MCF 10A (cell line): ENCODE measurements at regions of chr3 and their contacts with region 1.

Region 1: DNA sequence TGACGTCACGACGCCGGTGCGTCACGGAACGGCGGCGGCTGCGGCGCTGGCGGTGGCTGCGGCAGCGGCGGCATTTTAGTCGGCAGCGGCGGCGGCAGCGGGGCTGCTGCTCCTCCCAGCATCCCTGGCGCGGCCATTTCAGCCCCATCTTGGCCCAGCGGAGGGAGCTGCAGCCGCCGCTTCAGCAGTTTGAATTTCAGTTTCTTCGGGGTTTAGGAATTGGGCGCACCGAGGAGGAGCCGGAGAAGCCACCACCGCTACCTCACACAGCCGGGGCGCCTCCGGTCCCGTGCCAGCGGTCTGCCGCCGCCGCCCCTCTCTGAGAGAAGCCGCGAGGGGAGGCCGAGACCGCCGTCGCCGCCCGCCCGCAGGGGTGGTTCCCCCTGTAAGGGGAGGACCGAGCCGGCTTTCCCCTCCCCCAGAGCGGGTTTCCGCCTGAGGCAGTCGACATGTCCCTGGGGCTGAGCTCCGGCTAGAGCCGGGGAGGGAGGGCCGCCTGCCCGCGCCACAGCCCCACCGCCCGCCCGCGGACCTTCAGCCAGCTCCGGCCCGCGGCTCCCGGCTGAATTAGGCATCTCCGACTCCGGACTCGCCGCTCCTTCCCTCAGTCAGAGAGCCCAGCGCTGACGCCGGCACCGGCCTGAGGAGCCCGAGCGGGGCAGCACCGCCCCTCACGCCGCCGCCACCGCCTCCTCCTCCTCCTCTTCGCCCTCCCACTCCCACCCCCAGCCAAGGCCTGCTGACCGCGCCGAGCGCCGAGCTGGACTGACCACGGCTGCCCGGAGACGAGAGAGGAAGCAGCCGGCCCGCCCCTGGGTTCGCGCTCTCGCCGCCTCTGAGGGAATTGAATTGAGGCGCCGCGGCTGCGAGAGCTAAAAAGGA is at the start of gene TSC22D2:
- DNase-seq: peak; percentile 76
- H3K4me3 Mint-ChIP-seq: peak within 1 kb of the TSS; percentile 74
- H3K27ac Mint-ChIP-seq: peak within 1 kb of the TSS; percentile 99
- H3K4me1 Mint-ChIP-seq: peaks cover 17% of the 10 kb centered on the region
- H3K27me3 Mint-ChIP-seq: no peaks in the 10 kb centered on the region
- CTCF ChIP-seq: peak; percentile 10
- total RNA-seq, gene TSC22D2: 31.2 and 36.2 TPM in 2 replicates

Region 2: DNA sequence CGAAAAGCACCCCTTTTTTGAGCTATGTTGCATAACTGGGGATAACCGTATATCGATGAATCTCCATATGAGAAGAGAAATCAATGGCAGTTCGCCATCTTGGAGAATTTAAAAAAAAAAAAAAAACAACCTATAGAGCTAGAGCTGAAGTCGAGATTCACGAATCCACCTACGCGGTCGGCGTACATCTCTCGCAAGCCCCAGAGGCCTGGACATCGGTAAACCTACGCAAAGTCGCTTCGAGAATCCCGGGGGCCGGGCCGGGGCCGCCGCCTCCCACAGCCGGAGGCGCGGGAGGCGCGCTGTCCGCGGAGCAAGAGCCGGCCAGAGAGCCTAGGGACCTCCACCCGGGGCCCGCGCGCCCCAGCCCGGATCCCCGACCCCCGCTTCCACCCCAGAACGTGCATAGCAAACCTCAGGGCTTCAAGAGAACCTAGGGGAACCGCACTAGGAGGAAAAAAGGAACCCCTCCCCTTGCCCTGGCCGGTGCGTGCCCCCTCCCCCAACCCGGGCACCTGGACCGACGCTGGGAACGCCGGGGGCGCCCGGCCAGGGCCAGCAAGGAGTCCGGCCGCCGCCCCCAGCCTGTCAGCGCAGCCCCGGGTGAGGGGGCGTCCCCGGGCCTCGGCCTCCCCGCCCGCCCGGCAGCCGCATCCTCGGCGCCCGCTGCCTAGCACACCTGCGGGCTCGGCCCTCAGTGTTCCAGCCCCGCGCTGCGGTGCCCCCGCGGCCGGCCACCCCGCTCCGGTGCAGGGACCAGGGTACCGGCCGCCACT is 438.3 kb before region 1 on chr3:
- CTCF ChIA-PET with region 1: interaction called, 5 read pairs
- POLR2A ChIA-PET with region 1: interaction called, 19 read pairs
- intact Hi-C with region 1: loop called (anchors 5 kb)
- DNase-seq: peak; percentile 80
- H3K4me3 Mint-ChIP-seq: peak overlapping the region; percentile 80
- H3K27ac Mint-ChIP-seq: peak overlapping the region; percentile 84
- H3K4me1 Mint-ChIP-seq: peaks cover 28% of the 10 kb centered on the region
- H3K27me3 Mint-ChIP-seq: no peaks in the 10 kb centered on the region
- CTCF ChIP-seq: no peak

Region 3: GRCh38 chr3:150286390-150287147 is 121.9 kb before region 1 on chr3:
- CTCF ChIA-PET with region 1: interaction called, 30 read pairs
- POLR2A ChIA-PET with region 1: interaction called, 8 read pairs
- intact Hi-C with region 1: loop called (anchors 1 kb)
- DNase-seq: peak; percentile 72
- H3K4me3 Mint-ChIP-seq: no peak overlapping the region
- H3K27ac Mint-ChIP-seq: peak overlapping the region; percentile 64
- H3K4me1 Mint-ChIP-seq: peaks cover 9% of the 10 kb centered on the region
- H3K27me3 Mint-ChIP-seq: no peaks in the 10 kb centered on the region
- CTCF ChIP-seq: peak; percentile 58

Region 4: DNA sequence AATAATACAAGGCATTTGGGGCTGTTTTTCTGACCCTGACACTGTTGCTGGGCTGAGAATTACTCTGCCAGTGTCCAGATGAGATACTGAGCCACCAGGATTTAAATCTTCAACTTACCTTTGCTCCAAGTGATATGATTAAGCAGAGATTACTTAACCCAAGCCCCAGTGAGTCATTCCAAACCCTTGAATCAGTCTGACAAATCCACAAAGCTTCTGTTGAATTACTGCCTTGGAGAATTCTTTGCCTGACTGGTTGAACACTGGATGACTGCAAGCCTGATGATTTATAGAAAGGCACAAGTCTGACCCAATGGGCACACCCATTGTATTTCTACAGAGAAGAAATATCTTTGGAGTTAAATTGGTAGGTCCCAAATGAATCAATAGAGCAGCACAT is 88.6 kb before region 1 on chr3:
- CTCF ChIA-PET with region 1: interaction called, 10 read pairs
- POLR2A ChIA-PET with region 1: interaction called, 25 read pairs
- intact Hi-C with region 1: no loop called
- DNase-seq: peak; percentile 97
- H3K4me3 Mint-ChIP-seq: no peak overlapping the region
- H3K27ac Mint-ChIP-seq: no peak overlapping the region
- H3K4me1 Mint-ChIP-seq: peaks cover 22% of the 10 kb centered on the region
- H3K27me3 Mint-ChIP-seq: no peaks in the 10 kb centered on the region
- CTCF ChIP-seq: no peak

Region 5: DNA sequence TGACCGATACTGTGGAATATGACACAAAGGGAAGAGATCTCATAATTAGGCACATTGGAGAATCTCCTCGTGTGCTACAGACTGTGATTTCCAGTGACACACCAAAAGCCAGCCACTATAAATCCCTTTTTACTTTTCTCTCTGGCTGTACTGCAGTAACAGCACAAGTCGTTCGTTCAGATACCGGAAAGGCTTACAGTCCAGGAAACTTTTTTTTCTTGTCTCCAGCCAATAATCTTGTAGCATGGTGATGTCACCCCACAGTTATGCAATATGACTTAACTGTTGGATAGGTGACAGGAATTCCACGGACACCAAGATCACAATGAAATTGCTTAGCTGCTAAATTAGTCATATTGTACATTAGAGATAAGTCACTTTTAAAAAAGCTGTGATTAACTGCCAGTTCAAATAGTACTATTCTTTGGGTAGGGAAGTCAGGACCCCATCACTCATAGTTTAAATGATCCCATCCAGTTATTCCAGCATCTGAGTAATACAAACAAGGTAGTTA is 36.7 kb before region 1 on chr3:
- CTCF ChIA-PET with region 1: interaction called, 6 read pairs
- POLR2A ChIA-PET with region 1: interaction called, 43 read pairs
- intact Hi-C with region 1: loop called (anchors 1 kb)
- DNase-seq: peak; percentile 96
- H3K4me3 Mint-ChIP-seq: peak overlapping the region; percentile 74
- H3K27ac Mint-ChIP-seq: peak overlapping the region; percentile 79
- H3K4me1 Mint-ChIP-seq: peaks cover 44% of the 10 kb centered on the region
- H3K27me3 Mint-ChIP-seq: no peaks in the 10 kb centered on the region
- CTCF ChIP-seq: no peak

Region 6: GRCh38 chr3:150428562-150428961 is 20.1 kb after region 1 on chr3:
- CTCF ChIA-PET with region 1: interaction called, 10 read pairs
- POLR2A ChIA-PET with region 1: interaction called, 12 read pairs
- intact Hi-C with region 1: no loop called
- DNase-seq: no peak
- H3K4me3 Mint-ChIP-seq: no peak overlapping the region
- H3K27ac Mint-ChIP-seq: no peak overlapping the region
- H3K4me1 Mint-ChIP-seq: peaks cover 24% of the 10 kb centered on the region
- H3K27me3 Mint-ChIP-seq: no peaks in the 10 kb centered on the region
- CTCF ChIP-seq: no peak

Region 7: GRCh38 chr3:150495563-150496168 is 87.2 kb after region 1 on chr3:
- CTCF ChIA-PET with region 1: interaction called, 81 read pairs
- POLR2A ChIA-PET with region 1: interaction called, 68 read pairs
- intact Hi-C with region 1: loop called (anchors 1 kb)
- DNase-seq: peak; percentile 71
- H3K4me3 Mint-ChIP-seq: no peak overlapping the region
- H3K27ac Mint-ChIP-seq: no peak overlapping the region
- H3K4me1 Mint-ChIP-seq: peaks cover 17% of the 10 kb centered on the region
- H3K27me3 Mint-ChIP-seq: no peaks in the 10 kb centered on the region
- CTCF ChIP-seq: peak; percentile 64